Natural killer cell (primary cell): ENCODE measurements at regions of chr5 and their contacts with region 1.

Region 1: DNA sequence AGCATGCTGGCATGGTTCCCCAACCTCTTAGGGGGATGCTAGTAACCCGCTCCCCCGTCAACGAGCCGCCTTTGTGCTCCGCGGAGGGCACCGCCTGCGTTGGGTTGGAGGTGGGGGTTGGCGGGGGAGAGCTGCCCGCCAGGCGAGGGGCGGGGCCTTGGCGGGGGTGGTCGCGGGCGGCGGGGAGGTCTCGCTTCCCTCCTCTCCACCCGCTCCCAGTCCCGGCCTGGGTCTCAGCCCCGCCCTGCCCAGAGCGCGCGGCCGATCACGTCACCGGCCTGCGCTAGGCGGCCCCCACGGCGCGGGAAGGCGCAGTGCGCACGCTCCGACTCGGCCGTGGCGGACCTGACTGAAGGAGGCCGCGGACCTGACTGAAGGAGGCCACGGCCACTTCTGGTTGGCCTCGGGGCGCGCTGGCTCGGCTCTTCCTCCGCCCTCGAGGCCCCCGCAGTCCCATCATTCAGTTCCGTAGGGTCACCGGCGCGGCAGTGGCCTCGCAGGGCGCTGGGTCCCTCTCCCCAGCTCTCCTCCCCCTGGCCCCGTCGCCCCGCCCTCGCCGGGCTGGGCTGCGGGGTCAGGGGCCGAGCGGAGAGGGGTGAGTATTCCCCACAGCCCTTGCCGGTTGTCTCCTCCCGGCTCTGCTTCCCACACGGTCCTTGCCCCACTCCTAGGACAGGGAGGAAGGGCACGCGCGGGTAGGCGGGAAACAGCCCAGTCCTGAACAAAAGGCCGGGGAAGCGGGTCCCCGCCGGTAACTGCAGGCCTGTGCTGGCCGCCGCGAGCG is at the start of gene ATG10:
- DNase-seq: peak; percentile 90 to 94
- ATAC-seq: peak; percentile 92 to 98 (median 93)
- H3K4me3 ChIP-seq: peak within 1 kb of the TSS; percentile 99
- H3K4me3 Mint-ChIP-seq: peak within 1 kb of the TSS; percentile 100
- H3K27ac ChIP-seq: peak within 1 kb of the TSS; percentile 99
- H3K27ac Mint-ChIP-seq: peak within 1 kb of the TSS; percentile 95 to 96
- H3K4me1 ChIP-seq: peaks cover 10% of the 10 kb centered on the region
- H3K4me1 Mint-ChIP-seq: peaks cover 15 to 19% of the 10 kb centered on the region in 2 donors
- H3K27me3 ChIP-seq: no peaks in the 10 kb centered on the region
- H3K27me3 Mint-ChIP-seq: no peaks in the 10 kb centered on the region
- CTCF ChIP-seq: no peak
- total RNA-seq, gene ATG10: 9.0 to 11.5 (median 11.4) TPM

Region 2: GRCh38 chr5:81751009-81751835 is 220.7 kb before region 1 on chr5 and contains the start of gene SSBP2:
- intact Hi-C with region 1: loop called (anchors 2 kb)
- DNase-seq: peak; percentile 98 to 99
- ATAC-seq: peak; percentile 89 to 96 (median 90)
- H3K4me3 ChIP-seq: peak within 1 kb of the TSS; percentile 39
- H3K4me3 Mint-ChIP-seq: peak within 1 kb of the TSS; percentile 95
- H3K27ac ChIP-seq: peak within 1 kb of the TSS; percentile 87
- H3K27ac Mint-ChIP-seq: peak within 1 kb of the TSS; percentile 69 to 93
- H3K4me1 ChIP-seq: peaks cover 6% of the 10 kb centered on the region
- H3K4me1 Mint-ChIP-seq: peaks cover 0 to 11% of the 10 kb centered on the region in 2 donors
- H3K27me3 ChIP-seq: no peaks in the 10 kb centered on the region
- H3K27me3 Mint-ChIP-seq: peaks cover 0 to 12% of the 10 kb centered on the region in 2 donors
- CTCF ChIP-seq: no peak
- total RNA-seq, gene SSBP2: 13.1 to 17.3 (median 14.8) TPM

Region 3: GRCh38 chr5:82784521-82784920 is 812.6 kb after region 1 on chr5:
- intact Hi-C with region 1: no loop called
- DNase-seq: no peak
- ATAC-seq: no peak
- H3K4me3 ChIP-seq: no peak overlapping the region
- H3K4me3 Mint-ChIP-seq: no peak overlapping the region
- H3K27ac ChIP-seq: no peak overlapping the region
- H3K27ac Mint-ChIP-seq: no peak overlapping the region
- H3K4me1 ChIP-seq: no peaks in the 10 kb centered on the region
- H3K4me1 Mint-ChIP-seq: no peaks in the 10 kb centered on the region
- H3K27me3 ChIP-seq: no peaks in the 10 kb centered on the region
- H3K27me3 Mint-ChIP-seq: no peaks in the 10 kb centered on the region
- CTCF ChIP-seq: no peak